SK-N-SH (cell line): ENCODE measurements at regions of chr1 and their contacts with region 1.

Region 1: DNA sequence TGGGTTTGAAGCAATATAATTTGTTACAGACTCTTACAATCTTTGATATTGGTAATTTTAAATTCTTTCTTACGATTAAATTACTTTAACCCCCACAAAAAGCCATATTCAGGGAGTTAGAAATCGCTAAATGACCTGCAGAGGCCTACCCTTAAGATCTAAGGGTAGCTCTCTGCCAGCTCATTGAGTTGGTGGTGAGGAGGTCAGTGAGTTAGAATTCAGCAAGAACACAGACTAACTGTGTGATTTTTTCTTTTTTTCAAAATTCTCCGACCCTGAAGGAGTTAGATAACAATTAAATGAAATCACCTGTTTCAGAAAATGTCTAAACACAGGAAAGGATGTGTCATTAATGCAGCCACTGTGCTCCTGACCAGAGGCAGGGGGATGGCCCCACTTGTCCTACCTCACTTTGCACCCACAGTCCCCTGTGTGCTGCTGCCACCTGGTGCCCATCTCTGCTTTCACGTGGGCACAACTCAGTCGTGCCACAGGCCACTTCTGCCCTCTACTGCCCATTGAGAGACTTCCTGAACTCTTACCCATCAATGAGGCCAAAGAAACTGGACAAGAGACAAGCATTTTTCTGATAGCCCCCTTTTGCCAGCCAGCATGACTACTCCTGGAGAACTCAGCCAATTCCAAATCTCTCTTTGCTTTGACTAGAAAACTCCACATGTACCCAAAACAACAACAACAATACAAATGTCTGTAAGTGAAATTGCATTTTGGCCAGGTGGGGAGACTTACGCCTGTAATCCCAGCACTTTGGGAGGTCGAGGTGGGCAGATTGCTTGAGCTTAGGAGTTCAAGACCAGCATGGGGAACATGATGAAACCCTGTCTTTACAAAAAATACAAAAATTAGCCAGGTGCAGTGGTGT is 8.4 kb downstream of the CFAP45 start:
- DNase-seq: peak; percentile 87
- H3K4me3 ChIP-seq: no peak overlapping the region; a peak in 1 of 4 replicates
- H3K27ac ChIP-seq: peak overlapping the region in 1 of 2 experiments; percentile 94; a peak in 2 of 4 replicates
- H3K4me1 ChIP-seq: peaks cover 13 to 29% of the 10 kb centered on the region in 2 experiments
- H3K27me3 ChIP-seq: no peaks in the 10 kb centered on the region
- CTCF ChIP-seq: peak; percentile 100
- EP300 ChIP-seq: no peak
- RAD21 ChIP-seq: peak; percentile 100

Region 2: GRCh38 chr1:159780583-159781582 is 110.6 kb before region 1 on chr1 and contains the start of gene DUSP23:
- CTCF ChIA-PET with region 1: interaction called, 533 read pairs
- POLR2A ChIA-PET with region 1: no interaction called
- DNase-seq: peak; percentile 98
- H3K4me3 ChIP-seq: peak within 1 kb of the TSS; percentile 75 to 87
- H3K27ac ChIP-seq: peak within 1 kb of the TSS in 1 of 2 experiments; percentile 58; a peak in 2 of 4 replicates
- H3K4me1 ChIP-seq: peaks cover 0 to 20% of the 10 kb centered on the region in 2 experiments; a peak in 2 of 4 replicates
- H3K27me3 ChIP-seq: no peaks in the 10 kb centered on the region
- CTCF ChIP-seq: peak; percentile 86
- EP300 ChIP-seq: 0 out of 4 replicates have a peak, but pooled peaks of 1 of the 2 experiments have one; percentile 48
- RAD21 ChIP-seq: peak; percentile 87
- polyA plus RNA-seq, gene DUSP23: 41.2 and 44.3 TPM in 2 replicates

Region 3: DNA sequence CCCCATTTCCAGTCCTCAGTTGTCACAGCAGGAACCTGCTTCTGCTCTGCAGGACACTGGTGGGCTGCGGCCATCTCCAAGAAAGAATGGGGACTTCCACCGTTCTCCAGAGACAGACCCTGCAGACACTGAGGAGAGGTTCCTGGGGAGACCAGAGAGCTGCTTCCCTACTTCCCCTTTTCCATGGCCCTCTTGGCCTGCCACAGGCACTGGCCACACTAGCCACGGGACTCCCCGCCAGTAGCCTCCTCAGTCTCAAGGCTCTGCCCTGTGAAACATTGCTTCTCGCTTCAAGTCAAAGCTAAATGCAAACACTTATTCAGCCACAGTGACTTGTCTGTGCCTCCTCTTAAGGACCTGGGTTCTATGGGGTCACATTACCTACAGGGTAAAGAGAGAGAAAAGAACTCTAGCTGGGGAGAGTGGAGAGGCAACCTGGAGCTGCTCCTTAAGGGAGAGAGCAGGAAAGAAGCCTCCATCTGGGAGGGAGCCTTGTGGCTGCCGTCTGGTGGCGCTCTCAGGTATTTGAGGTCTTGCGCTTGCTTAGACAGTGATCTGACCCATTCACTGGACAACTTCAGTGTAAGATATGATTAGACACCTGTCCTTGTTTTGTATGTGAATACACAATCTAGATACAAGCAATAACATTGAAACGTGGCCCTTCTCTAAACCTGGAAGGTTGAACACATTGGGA is 70.2 kb before region 1 on chr1:
- CTCF ChIA-PET with region 1: interaction called, 21 read pairs
- POLR2A ChIA-PET with region 1: no interaction called
- DNase-seq: peak; percentile 53
- H3K4me3 ChIP-seq: no peak overlapping the region
- H3K27ac ChIP-seq: no peak overlapping the region
- H3K4me1 ChIP-seq: peaks cover 0 to 24% of the 10 kb centered on the region in 2 experiments; a peak in 1 of 4 replicates
- H3K27me3 ChIP-seq: no peaks in the 10 kb centered on the region
- CTCF ChIP-seq: peak; percentile 65
- EP300 ChIP-seq: no peak
- RAD21 ChIP-seq: peak; percentile 55

Region 4: DNA sequence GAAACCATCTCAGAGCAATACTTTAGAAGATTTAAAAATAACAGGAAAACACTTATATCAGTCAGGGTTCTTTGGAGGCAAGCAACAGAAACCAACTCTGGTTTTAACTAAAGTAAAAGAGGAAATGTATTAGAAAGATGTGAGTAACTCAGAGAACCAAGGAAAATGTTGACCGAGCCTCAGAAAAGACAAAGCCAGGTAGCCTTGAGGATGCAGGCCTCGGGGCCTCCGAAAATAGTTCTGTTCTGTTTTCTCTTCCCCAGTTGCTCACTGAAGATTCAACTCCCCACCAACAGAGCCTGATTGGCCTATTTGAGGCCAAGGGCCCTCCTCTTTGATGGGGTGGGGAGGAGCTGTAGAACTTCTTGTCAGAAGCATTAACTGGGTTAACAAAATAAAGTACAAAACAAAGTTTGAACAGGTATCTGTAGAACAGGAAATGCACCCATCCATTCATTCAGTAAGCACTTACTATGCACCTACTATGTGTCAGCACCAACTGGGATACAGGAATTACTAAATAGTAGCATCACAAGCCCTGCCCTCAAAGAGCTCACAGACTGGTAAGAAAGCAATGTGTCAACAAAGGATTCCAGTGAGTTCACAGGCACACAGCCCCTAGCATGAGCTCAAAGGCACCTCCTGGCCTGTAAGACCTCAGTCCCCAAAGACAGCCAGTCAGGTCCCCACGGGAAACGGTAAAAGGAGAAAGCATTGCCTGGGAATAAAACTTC is 52.2 kb before region 1 on chr1:
- CTCF ChIA-PET with region 1: interaction called, 22 read pairs
- POLR2A ChIA-PET with region 1: no interaction called
- DNase-seq: no peak
- H3K4me3 ChIP-seq: no peak overlapping the region
- H3K27ac ChIP-seq: no peak overlapping the region
- H3K4me1 ChIP-seq: peaks cover 0 to 3% of the 10 kb centered on the region in 2 experiments; a peak in 1 of 4 replicates
- H3K27me3 ChIP-seq: no peaks in the 10 kb centered on the region
- CTCF ChIP-seq: no peak
- EP300 ChIP-seq: no peak
- RAD21 ChIP-seq: no peak

Region 5: GRCh38 chr1:159867683-159868064 is 23.8 kb before region 1 on chr1:
- CTCF ChIA-PET with region 1: interaction called, 46 read pairs
- POLR2A ChIA-PET with region 1: no interaction called
- DNase-seq: no peak
- H3K4me3 ChIP-seq: no peak overlapping the region
- H3K27ac ChIP-seq: no peak overlapping the region
- H3K4me1 ChIP-seq: peaks cover 5 to 9% of the 10 kb centered on the region in 2 experiments; a peak in 1 of 4 replicates
- H3K27me3 ChIP-seq: no peaks in the 10 kb centered on the region
- CTCF ChIP-seq: no peak
- EP300 ChIP-seq: no peak
- RAD21 ChIP-seq: no peak

Region 6: GRCh38 chr1:159924981-159925712 is 33.6 kb after region 1 on chr1 and contains the start of gene TAGLN2:
- CTCF ChIA-PET with region 1: interaction called, 10 read pairs
- POLR2A ChIA-PET with region 1: no interaction called
- DNase-seq: peak; percentile 93
- H3K4me3 ChIP-seq: peak within 1 kb of the TSS; percentile 91 to 97
- H3K27ac ChIP-seq: peak within 1 kb of the TSS; percentile 73 to 97; a peak in 3 of 4 replicates
- H3K4me1 ChIP-seq: peaks cover 18 to 35% of the 10 kb centered on the region in 2 experiments; a peak in 2 of 4 replicates
- H3K27me3 ChIP-seq: no peaks in the 10 kb centered on the region
- CTCF ChIP-seq: no peak
- EP300 ChIP-seq: no peak
- RAD21 ChIP-seq: no peak
- polyA plus RNA-seq, gene TAGLN2: 625 and 646 TPM in 2 replicates

Region 7: DNA sequence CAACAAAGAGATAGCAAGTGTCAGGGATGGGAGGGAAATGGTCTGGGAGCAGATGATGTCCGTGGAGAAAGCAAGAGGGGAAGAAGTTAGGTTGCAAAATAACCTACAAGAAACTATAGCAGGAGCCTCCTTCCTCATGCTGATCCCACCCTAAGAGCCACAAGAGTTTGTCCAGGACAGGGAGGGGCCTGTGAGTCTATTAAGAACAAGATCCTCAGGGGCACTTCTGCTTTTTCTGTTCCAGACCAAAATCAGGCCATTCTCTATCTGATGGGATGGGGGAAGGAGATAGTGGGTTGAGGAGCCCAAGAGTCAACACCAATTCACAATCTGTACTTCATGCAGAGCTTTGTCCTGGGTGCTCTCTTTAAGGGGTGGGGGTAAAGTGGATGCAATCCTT is 252.2 kb after region 1 on chr1:
- CTCF ChIA-PET with region 1: no interaction called
- POLR2A ChIA-PET with region 1: no interaction called
- DNase-seq: no peak
- H3K4me3 ChIP-seq: no peak overlapping the region
- H3K27ac ChIP-seq: no peak overlapping the region
- H3K4me1 ChIP-seq: 0 out of 4 replicates have a peak, but pooled peaks cover 0 to 4% of the 10 kb centered on the region in 2 experiments
- H3K27me3 ChIP-seq: peaks cover 26% of the 10 kb centered on the region; the same call in 1 of the 2 replicates
- CTCF ChIP-seq: no peak
- EP300 ChIP-seq: no peak
- RAD21 ChIP-seq: no peak